Posterior cingulate gyrus (tissue), 11 donors: ENCODE measurements at regions of chr7 and their contacts with region 1.

Region 1: GRCh38 chr7:82234457-82235049 is 209.0 kb downstream of the CACNA2D1 start:
- DNase-seq: no peak

Region 2: DNA sequence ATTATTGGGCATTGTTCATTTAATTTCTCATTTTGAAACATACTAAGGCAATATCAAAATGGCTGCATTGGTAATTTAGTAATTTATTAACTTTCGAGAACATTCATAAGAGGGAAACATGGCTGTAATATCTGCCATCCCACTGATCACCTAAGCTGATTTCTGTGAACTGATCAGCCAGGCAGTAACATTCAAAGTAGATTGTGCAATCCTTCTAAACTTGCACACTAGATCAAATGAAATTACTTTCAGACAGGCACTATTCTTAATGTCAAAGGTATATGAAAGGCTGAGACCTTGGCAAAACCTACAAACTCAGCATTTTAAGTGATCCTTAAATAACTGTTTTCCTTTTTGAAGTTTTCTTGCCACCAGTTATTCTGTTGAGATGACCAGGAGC is 81.7 kb before region 1 on chr7:
- intact Hi-C with region 1: no loop called
- DNase-seq: no peak

Region 3: DNA sequence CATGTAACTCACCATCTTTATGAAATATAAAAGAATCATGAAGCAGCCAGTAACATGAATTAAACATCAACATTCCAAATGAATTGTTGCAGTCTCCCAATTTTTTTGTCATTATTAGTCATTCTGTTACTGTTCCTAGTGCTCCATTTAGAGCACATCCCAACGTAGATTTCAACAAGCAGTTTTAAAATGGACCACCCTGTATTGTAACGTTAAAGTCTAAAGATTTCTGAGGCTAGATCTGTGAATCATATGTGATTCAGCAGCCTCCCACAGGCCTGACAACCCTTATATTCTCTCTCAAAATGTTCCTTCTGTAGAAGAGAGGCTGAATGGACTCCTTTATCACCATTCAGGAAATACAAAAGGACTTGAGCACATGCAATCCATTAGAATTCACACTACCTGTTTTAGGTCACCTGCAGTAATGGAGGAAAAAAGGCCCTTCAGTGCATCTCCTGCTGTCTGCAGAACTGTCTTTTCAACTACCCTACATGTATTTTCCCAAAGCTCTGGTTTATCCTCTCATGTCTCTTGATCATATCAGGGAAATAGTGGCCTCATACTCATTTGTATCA is 127.7 kb after region 1 on chr7:
- intact Hi-C with region 1: loop called (anchors 5 kb)
- DNase-seq: no peak

Region 4: DNA sequence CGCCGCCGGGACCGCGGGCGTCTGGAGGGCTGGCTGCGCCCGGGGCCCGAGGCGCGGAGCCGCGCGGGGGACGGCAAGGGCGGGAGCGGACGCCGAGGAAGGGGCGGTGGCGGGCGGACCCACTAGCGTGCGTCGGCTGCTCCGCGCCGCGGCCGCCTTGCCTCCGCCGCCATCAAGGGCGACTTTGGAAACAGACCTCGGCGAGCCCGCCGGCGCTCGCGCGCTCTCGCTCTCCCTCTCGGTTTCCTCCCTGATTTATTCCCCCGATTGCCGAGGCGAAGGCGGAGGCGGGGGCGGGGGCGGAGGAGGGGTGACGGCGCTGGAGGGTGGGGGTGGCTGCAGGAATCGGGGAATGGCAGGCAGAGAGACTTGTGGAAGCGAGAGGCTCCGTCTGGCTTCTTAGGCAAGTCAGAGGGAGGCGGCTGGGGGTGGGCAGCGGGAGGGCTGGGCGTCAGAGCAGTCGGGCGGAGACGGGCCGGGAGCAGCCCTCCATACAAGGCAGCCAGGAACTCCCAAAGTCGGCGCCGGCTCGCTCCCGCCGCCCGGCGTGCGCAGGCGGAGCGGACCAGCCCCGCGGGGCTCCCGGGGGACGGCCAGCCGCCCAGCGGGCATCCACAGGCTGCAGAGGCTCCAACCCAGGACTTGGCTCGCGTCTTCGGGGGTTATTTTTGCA is 209.1 kb after region 1 on chr7 and contains the start of gene CACNA2D1:
- intact Hi-C with region 1: loop called (anchors 5 kb)
- DNase-seq: peak; percentile 66 to 97 (median 78)

Region 5: DNA sequence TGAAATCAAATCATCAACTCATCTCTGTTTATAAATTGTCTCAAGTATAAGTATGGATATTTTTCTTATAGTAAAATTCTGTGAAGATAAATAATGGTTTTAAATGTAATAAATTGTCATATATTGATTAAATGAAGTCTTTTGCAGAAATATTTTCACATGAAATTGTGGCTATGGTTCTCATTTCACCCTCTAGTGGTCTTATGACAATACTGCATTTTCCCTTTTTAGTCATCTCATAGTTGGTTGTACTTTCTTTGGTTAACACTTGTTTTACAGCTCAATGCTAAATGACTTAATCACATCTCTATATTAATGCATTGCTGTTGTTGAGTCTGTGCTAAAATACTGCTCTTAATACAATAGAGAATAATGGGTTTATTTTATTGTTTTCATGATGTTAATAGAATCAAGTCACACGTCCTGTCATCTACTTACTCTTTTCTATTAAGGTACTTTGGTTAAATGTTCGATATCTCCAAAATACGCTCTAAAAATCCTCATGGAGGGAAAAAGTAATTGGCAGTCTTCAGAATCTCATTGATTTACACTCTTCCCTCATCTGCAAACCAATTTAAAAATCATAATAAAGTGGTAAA is 247.0 kb after region 1 on chr7:
- intact Hi-C with region 1: loop called (anchors 5 kb)
- DNase-seq: no peak

Region 6: DNA sequence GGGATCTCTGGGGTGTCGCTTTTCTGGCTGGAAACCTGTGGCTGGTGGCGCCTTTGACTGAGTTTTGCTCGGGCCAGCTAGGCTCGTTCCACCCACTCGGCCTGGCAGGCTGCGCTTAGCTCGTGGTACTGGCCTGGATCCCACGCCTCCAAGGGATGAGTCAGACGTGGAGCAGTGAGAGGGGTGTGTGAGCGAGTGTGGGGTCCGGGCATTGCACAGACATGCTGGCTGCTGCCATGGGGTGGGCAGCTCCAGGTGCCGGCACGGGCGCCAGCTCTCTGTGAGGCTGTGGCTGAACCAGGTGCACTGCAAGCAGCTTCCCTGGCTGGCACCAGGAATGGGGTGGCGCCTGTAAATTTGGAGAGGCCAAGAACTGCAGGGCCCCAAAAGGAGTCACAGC is 272.1 kb after region 1 on chr7:
- intact Hi-C with region 1: no loop called
- DNase-seq: peak; percentile 36 to 95 (median 68)

Region 7: GRCh38 chr7:82572195-82572880 is 337.8 kb after region 1 on chr7:
- intact Hi-C with region 1: loop called (anchors 1 kb)
- DNase-seq: peak; percentile 65 to 96 (median 90)

Region 8: DNA sequence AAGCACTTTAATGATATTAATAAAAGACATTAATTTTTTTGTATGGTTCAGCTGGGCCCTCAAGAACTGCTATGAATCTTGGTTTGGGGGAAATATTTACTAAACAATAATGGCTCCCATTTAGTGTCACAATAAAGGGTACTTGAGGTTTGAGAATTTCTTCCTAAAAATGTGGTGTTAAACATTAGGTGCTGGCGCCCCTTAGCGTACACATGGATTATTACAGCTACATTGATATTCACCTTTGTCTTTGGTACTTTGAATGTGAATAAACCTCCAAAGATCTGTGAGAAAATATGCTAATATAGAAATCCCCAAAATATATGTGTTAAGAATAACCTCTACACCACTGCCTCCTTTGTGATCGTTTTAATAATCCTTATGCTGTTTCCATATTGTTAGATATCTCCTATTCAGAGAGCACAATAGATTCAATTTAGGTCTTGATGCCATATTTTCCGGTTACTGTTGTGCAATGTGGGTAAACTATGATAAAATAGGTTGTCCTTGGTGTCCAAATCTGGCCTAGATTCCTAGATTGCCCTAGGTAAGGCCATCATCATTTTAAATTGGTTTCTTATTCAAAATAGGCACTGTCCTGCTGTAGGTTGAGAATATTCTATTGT is 370.8 kb after region 1 on chr7:
- intact Hi-C with region 1: loop called (anchors 10 kb)
- DNase-seq: peak in 2 of 10 donors; percentile 10 to 37